ENCODE measurements at regions of chr13 and their contacts with region 1.

Region 1: DNA sequence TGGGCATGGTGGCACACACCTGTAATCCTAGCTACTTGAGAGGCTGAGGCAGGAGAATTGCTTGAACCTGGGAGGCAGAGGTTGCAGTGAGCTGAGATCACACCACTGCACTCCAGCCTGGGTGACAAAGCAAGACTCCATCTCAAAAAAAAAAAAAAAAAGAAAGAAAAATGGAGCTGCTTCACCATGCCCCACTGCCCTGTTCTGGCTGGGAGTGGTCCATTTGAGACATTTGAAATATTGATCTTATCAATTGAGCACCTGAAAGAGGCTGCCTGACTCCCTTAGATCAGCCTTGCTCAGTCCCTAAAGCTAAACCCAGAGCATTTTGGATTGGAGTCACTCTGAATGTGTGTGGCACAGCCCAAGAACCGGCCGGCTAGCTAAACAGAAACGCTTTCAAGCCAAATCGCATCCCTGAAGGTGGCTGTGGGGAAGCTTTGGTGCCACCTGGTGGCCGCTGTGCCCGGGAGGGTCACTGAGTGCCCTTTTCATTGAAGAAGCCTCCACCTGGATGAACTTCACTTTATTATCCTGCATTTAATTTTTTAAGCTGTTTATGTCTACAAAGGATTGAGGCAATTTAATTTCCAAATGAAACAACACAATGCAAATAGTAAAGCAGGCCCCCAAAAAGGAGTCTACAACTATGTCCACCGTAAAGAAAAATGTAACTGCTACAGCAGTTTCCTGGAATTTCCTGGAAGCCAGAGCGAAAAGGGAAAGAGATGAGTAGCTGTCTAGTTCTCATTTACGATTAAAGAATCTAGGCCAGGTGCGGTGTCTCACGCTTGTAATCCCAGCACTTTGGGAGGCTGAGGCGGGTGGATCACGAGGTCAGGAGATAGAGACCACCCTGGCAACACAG is 53.1 kb upstream of the SERPINE3 start:
- DNase-seq: peak; percentile 72
- ATAC-seq: peak; percentile 68
- H3K4me3 ChIP-seq: no peak overlapping the region
- H3K4me3 Mint-ChIP-seq: no peak overlapping the region
- H3K27ac ChIP-seq: no peak overlapping the region
- H3K27ac Mint-ChIP-seq: peak overlapping the region; percentile 1
- H3K4me1 ChIP-seq: peaks cover 0 to 3% of the 10 kb centered on the region in 2 donors
- H3K4me1 Mint-ChIP-seq: no peaks in the 10 kb centered on the region
- H3K27me3 ChIP-seq: peaks cover 0 to 9% (median 0%) of the 10 kb centered on the region in 4 experiments
- H3K27me3 Mint-ChIP-seq: no peaks in the 10 kb centered on the region
- CTCF ChIP-seq: peak; percentile 96

Region 2: DNA sequence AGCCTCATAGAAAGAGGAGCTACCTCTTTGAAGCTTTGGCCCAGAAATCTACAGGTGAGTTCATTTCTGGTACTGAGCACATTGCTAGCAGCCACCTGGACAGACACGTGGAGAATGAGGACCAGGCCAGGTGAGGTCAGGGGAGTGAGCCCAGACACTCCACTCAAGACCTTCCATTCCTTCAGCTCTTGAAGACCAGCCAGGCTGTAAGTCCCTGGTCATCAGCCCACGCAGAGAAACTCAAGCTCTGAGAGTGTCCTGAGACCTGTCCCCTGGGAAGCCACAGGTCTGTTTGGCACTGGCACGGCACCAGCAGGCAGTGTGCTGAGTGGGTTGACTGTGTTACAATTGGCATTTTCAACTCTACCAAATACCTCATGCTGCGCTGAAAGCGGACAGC is 202.7 kb before region 1 on chr13:
- CTCF ChIA-PET with region 1: no interaction called
- POLR2A ChIA-PET with region 1: no interaction called
- intact Hi-C with region 1: no loop called
- DNase-seq: no peak
- ATAC-seq: no peak
- H3K4me3 ChIP-seq: no peak overlapping the region
- H3K4me3 Mint-ChIP-seq: no peak overlapping the region
- H3K27ac ChIP-seq: no peak overlapping the region
- H3K27ac Mint-ChIP-seq: no peak overlapping the region
- H3K4me1 ChIP-seq: no peaks in the 10 kb centered on the region
- H3K4me1 Mint-ChIP-seq: no peaks in the 10 kb centered on the region
- H3K27me3 ChIP-seq: no peaks in the 10 kb centered on the region
- H3K27me3 Mint-ChIP-seq: peaks cover 3% of the 10 kb centered on the region
- CTCF ChIP-seq: no peak

Region 3: DNA sequence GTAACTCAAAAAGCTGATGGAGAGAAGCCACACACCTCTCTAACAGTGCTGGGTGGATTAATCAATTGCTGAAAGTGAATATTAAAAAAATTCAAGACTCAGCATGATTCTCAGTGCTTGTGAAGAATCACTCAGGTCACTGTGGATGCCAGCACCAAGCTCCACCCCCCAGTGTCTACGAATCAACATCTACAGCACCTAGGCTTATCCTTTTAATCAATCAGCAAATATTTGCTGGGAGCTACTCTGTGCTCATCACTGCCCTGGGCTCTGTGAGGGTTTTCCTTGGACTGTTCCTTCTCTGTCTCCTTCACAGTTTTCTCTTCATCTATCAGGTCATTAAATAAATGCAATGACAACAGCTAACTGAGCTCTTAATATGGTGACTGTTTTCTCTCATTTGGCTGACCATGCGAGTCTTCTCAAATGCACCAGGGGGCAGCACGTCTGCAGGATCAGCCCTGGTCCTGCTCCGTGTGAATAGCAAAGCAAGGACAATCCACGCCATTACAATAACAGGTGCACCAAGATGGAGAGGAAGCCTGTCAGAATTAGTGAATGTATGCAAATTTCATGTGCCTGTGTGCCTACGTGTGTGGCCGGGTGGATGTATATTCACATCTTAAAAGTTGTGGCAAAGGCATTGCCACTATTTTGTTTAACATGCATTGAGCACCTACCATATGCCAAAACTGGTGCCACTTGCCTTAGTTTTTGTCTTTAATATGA is 160.7 kb before region 1 on chr13:
- CTCF ChIA-PET with region 1: interaction called, 150 read pairs
- POLR2A ChIA-PET with region 1: no interaction called
- intact Hi-C with region 1: no loop called
- DNase-seq: peak; percentile 71
- ATAC-seq: peak; percentile 80
- H3K4me3 ChIP-seq: no peak overlapping the region
- H3K4me3 Mint-ChIP-seq: no peak overlapping the region
- H3K27ac ChIP-seq: no peak overlapping the region
- H3K27ac Mint-ChIP-seq: no peak overlapping the region
- H3K4me1 ChIP-seq: peaks cover 0 to 8% of the 10 kb centered on the region in 2 donors
- H3K4me1 Mint-ChIP-seq: peaks cover 4% of the 10 kb centered on the region
- H3K27me3 ChIP-seq: peaks cover 0 to 6% (median 2%) of the 10 kb centered on the region in 4 experiments
- H3K27me3 Mint-ChIP-seq: peaks cover 25% of the 10 kb centered on the region
- CTCF ChIP-seq: peak; percentile 77

Region 4: DNA sequence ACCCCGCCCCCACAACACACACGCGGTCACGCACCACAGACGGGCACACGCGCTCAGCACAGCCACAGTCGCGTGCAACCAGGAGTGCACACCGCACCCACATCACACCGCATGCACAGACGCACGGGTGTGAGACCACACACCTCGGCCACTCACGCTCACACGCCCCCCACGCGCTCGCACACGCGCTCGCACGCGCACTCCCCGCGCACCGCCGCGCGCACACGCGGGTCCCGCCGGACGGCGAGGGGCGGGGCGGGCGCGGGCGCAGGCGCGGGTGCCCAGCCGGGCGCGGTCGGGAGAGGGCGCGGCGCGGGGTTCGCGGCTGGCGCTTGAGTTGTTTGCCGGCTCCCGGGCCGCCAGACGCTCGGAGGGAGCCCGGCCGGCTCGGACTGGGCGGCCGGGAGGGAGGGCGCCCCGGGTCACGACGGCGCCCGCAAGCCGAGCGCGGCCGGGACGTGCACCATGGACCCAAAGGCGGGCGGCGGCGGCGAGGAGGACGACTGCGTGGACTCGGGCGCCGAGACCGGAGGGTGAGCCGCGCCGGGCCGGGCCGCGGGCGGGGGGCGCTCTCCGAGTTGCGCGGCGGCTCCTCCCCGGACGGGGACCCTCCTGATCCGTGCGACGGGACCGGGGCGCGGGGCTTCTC is 64.2 kb before region 1 on chr13 and contains the start of gene FAM124A:
- CTCF ChIA-PET with region 1: interaction called, 19 read pairs
- POLR2A ChIA-PET with region 1: no interaction called
- intact Hi-C with region 1: no loop called
- DNase-seq: peak; percentile 65
- ATAC-seq: peak; percentile 76
- H3K4me3 ChIP-seq: peak within 1 kb of the TSS; percentile 31 to 65 (median 52)
- H3K4me3 Mint-ChIP-seq: peak within 1 kb of the TSS; percentile 86
- H3K27ac ChIP-seq: no peak within 1 kb of the TSS
- H3K27ac Mint-ChIP-seq: no peak within 1 kb of the TSS
- H3K4me1 ChIP-seq: peaks cover 10 to 14% of the 10 kb centered on the region in 2 donors
- H3K4me1 Mint-ChIP-seq: peaks cover 3% of the 10 kb centered on the region
- H3K27me3 ChIP-seq: peaks cover 0 to 38% (median 16%) of the 10 kb centered on the region in 4 experiments
- H3K27me3 Mint-ChIP-seq: peaks cover 55% of the 10 kb centered on the region
- CTCF ChIP-seq: peak; percentile 13
- total RNA-seq, gene FAM124A: 0.15 and 0.39 TPM in 2 replicates

Region 5: DNA sequence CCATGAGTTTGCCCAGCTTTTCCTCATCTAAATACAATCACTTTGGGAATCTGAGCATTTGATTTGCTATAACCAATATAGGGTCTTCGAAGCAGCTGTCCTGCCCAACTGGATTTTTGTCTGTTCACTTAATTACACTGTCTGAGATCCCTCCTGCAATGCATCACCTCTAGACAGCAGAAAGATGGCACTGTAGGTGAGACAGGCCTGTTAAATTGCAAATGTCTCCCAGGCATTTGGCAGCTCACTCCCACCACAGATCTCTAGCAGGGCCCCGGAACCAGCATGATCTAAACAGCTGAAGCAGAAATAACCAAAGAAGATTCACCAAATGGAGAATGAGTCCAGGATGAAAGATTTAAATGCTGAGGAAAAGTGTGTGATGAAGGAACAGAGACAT is 11.2 kb after region 1 on chr13:
- CTCF ChIA-PET with region 1: interaction called, 25 read pairs
- POLR2A ChIA-PET with region 1: interaction called, 12 read pairs
- intact Hi-C with region 1: no loop called
- DNase-seq: no peak
- ATAC-seq: no peak
- H3K4me3 ChIP-seq: no peak overlapping the region
- H3K4me3 Mint-ChIP-seq: no peak overlapping the region
- H3K27ac ChIP-seq: no peak overlapping the region
- H3K27ac Mint-ChIP-seq: no peak overlapping the region
- H3K4me1 ChIP-seq: no peaks in the 10 kb centered on the region
- H3K4me1 Mint-ChIP-seq: no peaks in the 10 kb centered on the region
- H3K27me3 ChIP-seq: peaks cover 0 to 2% (median 0%) of the 10 kb centered on the region in 4 experiments
- H3K27me3 Mint-ChIP-seq: peaks cover 3% of the 10 kb centered on the region
- CTCF ChIP-seq: no peak

Region 6: DNA sequence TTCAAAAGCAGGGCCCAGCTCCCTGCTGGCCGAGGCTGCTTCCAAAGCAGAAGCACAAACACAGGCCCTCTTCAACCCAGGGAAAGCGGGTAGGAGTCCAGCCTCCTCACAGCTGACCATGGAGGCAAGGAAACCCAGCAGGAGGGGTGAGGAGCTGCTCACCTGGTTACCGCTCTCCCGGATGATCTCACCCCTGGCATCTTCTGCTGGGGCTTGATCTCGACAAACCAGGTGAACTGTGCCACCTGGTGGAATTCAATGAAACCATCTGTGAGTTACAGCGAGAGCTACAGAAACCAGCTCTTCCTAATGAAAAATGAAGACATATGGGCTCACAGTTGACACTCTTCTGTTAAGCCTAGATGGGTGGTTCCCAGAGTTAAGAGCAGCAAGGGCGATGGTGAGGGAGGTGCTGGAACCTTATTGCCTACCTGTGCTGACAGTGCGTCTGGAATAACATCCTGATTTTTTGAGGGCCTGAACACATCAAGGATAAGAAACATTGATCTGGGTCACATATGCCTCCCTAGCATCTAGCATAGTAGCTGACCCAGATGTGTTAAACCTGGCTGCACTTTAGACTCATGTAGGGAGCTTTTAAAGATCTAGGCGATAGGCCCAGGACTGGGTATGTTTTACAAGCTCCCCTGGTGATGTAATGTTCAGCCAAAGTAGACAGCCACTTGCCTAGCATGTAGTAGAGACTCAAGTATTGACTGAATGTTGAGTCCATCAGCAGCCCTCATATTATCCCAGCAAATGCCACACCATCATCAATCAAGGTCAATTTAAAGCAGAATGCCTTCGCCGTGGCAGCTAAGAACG is 511.5 kb after region 1 on chr13:
- CTCF ChIA-PET with region 1: interaction called, 38 read pairs
- POLR2A ChIA-PET with region 1: no interaction called
- intact Hi-C with region 1: loop called (anchors 2 kb)
- DNase-seq: peak; percentile 76
- ATAC-seq: peak; percentile 60
- H3K4me3 ChIP-seq: no peak overlapping the region
- H3K4me3 Mint-ChIP-seq: no peak overlapping the region
- H3K27ac ChIP-seq: no peak overlapping the region
- H3K27ac Mint-ChIP-seq: peak overlapping the region; percentile 5
- H3K4me1 ChIP-seq: peaks cover 37 to 39% of the 10 kb centered on the region in 2 donors
- H3K4me1 Mint-ChIP-seq: peaks cover 45% of the 10 kb centered on the region
- H3K27me3 ChIP-seq: no peaks in the 10 kb centered on the region
- H3K27me3 Mint-ChIP-seq: no peaks in the 10 kb centered on the region
- CTCF ChIP-seq: peak; percentile 68

Measured in B cell (primary cell).